AG04450 (cell line): ENCODE measurements at regions of chr10 and their contacts with region 1.

Region 1: DNA sequence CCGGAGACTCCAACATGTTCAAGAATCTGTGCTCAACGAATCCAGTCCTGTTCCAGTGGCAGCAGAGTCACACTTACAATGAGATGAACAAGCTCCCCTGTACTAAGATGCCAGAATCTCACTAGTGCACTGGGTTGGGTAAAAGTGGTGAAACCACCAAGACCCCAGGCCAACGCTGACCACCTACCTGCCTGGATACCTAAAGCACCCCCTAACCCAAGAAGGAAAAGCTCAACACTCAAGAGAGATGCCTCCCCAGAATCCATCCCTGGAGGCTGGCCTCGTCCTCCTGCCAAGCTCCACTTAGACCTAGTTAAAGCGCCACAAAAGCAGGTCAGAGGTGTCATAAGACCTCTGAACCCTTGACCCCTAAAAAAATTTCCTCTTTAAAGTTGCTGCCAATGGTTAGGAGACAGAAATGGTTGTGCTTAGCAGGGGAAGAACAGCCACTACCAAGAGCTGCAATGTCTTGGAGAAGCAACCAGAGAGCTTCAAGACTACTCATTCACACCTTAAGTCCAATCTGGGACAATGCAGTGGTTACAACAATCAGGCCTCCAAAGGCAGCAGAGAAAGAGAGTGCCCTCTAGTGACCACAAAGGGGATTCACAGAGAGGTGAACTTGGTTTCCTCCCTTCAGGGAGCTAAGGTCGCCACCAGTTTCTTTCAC is 94.6 kb upstream of the MACROH2A2 start:
- DNase-seq: no peak
- H3K4me3 ChIP-seq: no peak overlapping the region
- H3K27ac ChIP-seq: no peak overlapping the region
- H3K27me3 ChIP-seq: no peaks in the 10 kb centered on the region
- CTCF ChIP-seq: peak; percentile 89

Region 2: GRCh38 chr10:69644658-69645295 is 313.2 kb before region 1 on chr10:
- CTCF ChIA-PET with region 1: interaction called, 18 read pairs
- POLR2A ChIA-PET with region 1: no interaction called
- DNase-seq: peak; percentile 20
- H3K4me3 ChIP-seq: no peak overlapping the region
- H3K27ac ChIP-seq: no peak overlapping the region
- H3K27me3 ChIP-seq: peaks cover 51% of the 10 kb centered on the region
- CTCF ChIP-seq: peak; percentile 87

Region 3: GRCh38 chr10:69786791-69787190 is 171.2 kb before region 1 on chr10:
- CTCF ChIA-PET with region 1: interaction called, 44 read pairs
- POLR2A ChIA-PET with region 1: no interaction called
- DNase-seq: no peak
- H3K4me3 ChIP-seq: no peak overlapping the region
- H3K27ac ChIP-seq: no peak overlapping the region
- H3K27me3 ChIP-seq: peaks cover 32% of the 10 kb centered on the region
- CTCF ChIP-seq: peak; percentile 54

Region 4: DNA sequence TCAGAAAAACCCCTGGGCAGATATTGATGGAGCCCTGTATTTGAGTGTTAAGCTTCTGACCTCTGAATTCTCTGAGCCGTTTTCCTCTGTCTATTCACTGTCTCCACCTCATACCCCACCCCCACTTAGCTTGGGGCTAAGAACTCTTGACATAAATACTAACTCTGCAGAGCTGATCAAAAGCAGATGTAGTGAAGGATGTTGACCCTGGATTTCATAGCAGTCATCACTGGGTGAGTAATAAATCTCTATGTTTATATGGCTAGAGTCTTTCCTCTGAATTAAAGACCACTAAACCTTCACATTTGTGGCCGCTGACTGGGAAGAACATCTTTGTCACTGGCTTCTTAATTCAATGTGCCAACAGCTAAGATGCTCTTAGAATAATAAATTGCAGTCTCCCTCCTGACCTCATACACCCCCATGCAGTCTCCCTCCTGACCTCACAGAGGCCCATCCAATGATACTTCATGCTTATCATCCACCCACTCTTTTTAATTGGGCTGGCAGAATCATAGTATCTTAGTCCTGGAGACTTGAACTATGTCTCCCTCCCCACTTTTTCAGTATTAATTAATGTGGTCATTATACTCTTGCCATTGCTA is 16.6 kb after region 1 on chr10:
- CTCF ChIA-PET with region 1: interaction called, 22 read pairs
- POLR2A ChIA-PET with region 1: no interaction called
- DNase-seq: peak; percentile 67
- H3K4me3 ChIP-seq: no peak overlapping the region
- H3K27ac ChIP-seq: no peak overlapping the region
- H3K27me3 ChIP-seq: peaks cover 6% of the 10 kb centered on the region
- CTCF ChIP-seq: no peak